ENCODE measurements at regions of chr11 and their contacts with region 1.

Region 1: DNA sequence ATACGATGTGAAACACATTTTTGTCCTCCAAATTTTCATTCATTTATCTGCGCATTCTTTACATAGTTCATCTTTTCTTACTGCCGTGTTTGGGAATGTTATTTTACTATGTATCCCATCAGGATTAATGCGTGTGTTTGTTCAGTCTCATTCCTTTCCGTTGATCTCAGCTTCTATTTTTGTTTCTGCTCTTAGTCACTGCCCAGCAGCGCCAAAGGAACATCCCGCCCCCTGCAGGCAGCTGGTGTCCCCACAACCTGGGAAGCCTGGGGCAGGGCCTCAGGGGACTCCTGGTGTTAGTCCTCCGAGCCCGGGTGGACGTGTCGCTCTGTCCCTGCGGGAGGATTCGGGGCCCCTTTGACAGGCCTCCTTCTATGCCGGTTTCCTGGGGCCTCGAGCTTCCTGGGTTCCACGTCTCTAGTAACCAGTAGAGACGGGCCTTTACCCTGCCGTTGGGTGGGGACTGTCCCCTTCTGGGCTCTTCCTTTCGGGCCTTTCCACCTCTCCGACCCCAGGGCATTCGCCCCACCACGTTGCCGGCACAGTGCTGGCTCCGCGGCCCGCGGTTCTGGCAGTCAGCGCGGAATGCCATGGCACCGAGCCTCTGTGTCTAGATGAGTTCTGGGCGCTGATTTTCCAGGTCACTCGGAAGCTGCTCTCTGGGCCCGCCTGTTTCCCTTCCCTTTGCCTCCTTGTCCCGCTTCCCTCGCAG is 39.8 kb downstream of the WEE1 start:
- DNase-seq: peak; percentile 97
- H3K4me3 ChIP-seq: peak overlapping the region; percentile 51
- H3K27ac ChIP-seq: peak overlapping the region; percentile 99
- H3K27me3 ChIP-seq: no peaks in the 10 kb centered on the region
- CTCF ChIP-seq: peak; percentile 96

Region 2: GRCh38 chr11:9573052-9573774 is 40.1 kb before region 1 on chr11 and contains the start of gene WEE1:
- CTCF ChIA-PET with region 1: interaction called, 15 read pairs
- POLR2A ChIA-PET with region 1: interaction called, 11 read pairs
- DNase-seq: peak; percentile 95
- H3K4me3 ChIP-seq: peak within 1 kb of the TSS; percentile 82
- H3K27ac ChIP-seq: peak within 1 kb of the TSS; percentile 97
- H3K27me3 ChIP-seq: no peaks in the 10 kb centered on the region
- CTCF ChIP-seq: no peak
- polyA plus RNA-seq, gene WEE1: 27.2 and 44.8 TPM in 2 replicates

Measured in AG04450 (cell line).